ENCODE measurements at regions of chr4 and their contacts with region 1.

Region 1: GRCh38 chr4:64539234-64539849 is 130.1 kb upstream of the TECRL start:
- DNase-seq: peak in 1 of 9 donors; percentile 2
- ATAC-seq: no peak
- H3K4me3 ChIP-seq: no peak overlapping the region
- H3K4me3 Mint-ChIP-seq: no peak overlapping the region
- H3K27ac ChIP-seq: no peak overlapping the region
- H3K27ac Mint-ChIP-seq: no peak overlapping the region
- H3K4me1 ChIP-seq: no peaks in the 10 kb centered on the region
- H3K4me1 Mint-ChIP-seq: no peaks in the 10 kb centered on the region
- H3K27me3 ChIP-seq: no peaks in the 10 kb centered on the region
- H3K27me3 Mint-ChIP-seq: no peaks in the 10 kb centered on the region

Region 2: GRCh38 chr4:63728480-63729177 is 810.7 kb before region 1 on chr4:
- CTCF ChIA-PET with region 1: no interaction called
- POLR2A ChIA-PET with region 1: no interaction called
- intact Hi-C with region 1: no loop called
- DNase-seq: no peak
- ATAC-seq: no peak
- H3K4me3 ChIP-seq: no peak overlapping the region
- H3K4me3 Mint-ChIP-seq: no peak overlapping the region
- H3K27ac ChIP-seq: no peak overlapping the region
- H3K27ac Mint-ChIP-seq: no peak overlapping the region
- H3K4me1 ChIP-seq: no peaks in the 10 kb centered on the region
- H3K4me1 Mint-ChIP-seq: no peaks in the 10 kb centered on the region
- H3K27me3 ChIP-seq: no peaks in the 10 kb centered on the region
- H3K27me3 Mint-ChIP-seq: no peaks in the 10 kb centered on the region

Region 3: GRCh38 chr4:64158648-64159326 is 380.6 kb before region 1 on chr4:
- CTCF ChIA-PET with region 1: no interaction called
- POLR2A ChIA-PET with region 1: no interaction called
- intact Hi-C with region 1: loop called in 1 of 2 experiments (anchors 1 kb)
- DNase-seq: peak in 5 of 9 donors; percentile 10 to 25 (median 17)
- ATAC-seq: no peak
- H3K4me3 ChIP-seq: no peak overlapping the region
- H3K4me3 Mint-ChIP-seq: peak overlapping the region in 4 of 10 donors; percentile 8 to 28 (median 19)
- H3K27ac ChIP-seq: no peak overlapping the region
- H3K27ac Mint-ChIP-seq: no peak overlapping the region
- H3K4me1 ChIP-seq: no peaks in the 10 kb centered on the region
- H3K4me1 Mint-ChIP-seq: peaks cover 0 to 2% (median 0%) of the 10 kb centered on the region in 7 donors
- H3K27me3 ChIP-seq: no peaks in the 10 kb centered on the region
- H3K27me3 Mint-ChIP-seq: no peaks in the 10 kb centered on the region